ENCODE measurements at regions of chr1 and their contacts with region 1.

Region 1: GRCh38 chr1:59947047-59947938 is 20.7 kb upstream of the CYP2J2 start:
- DNase-seq: peak; percentile 60
- H3K4me3 ChIP-seq: peak overlapping the region in 1 of 2 experiments; percentile 45; a peak in 1 of 4 replicates
- H3K27ac ChIP-seq: no peak overlapping the region
- H3K4me1 ChIP-seq: peaks cover 4 to 6% of the 10 kb centered on the region in 2 experiments; a peak in 2 of 4 replicates
- H3K27me3 ChIP-seq: peaks cover 4% of the 10 kb centered on the region; the same call in 1 of the 2 replicates
- CTCF ChIP-seq: peak; percentile 92
- EP300 ChIP-seq: no peak
- RAD21 ChIP-seq: peak; percentile 92

Region 2: GRCh38 chr1:59879574-59879973 is 67.7 kb before region 1 on chr1:
- CTCF ChIA-PET with region 1: interaction called, 50 read pairs
- POLR2A ChIA-PET with region 1: no interaction called
- DNase-seq: peak; percentile 26
- H3K4me3 ChIP-seq: no peak overlapping the region; a peak in 1 of 4 replicates
- H3K27ac ChIP-seq: no peak overlapping the region
- H3K4me1 ChIP-seq: no peaks in the 10 kb centered on the region; a peak in 1 of 4 replicates
- H3K27me3 ChIP-seq: no peaks in the 10 kb centered on the region
- CTCF ChIP-seq: peak; percentile 53
- EP300 ChIP-seq: no peak
- RAD21 ChIP-seq: peak; percentile 62

Region 3: GRCh38 chr1:59892841-59893811 is 54.2 kb before region 1 on chr1:
- CTCF ChIA-PET with region 1: interaction called, 24 read pairs
- POLR2A ChIA-PET with region 1: no interaction called
- DNase-seq: no peak
- H3K4me3 ChIP-seq: no peak overlapping the region
- H3K27ac ChIP-seq: no peak overlapping the region
- H3K4me1 ChIP-seq: no peaks in the 10 kb centered on the region
- H3K27me3 ChIP-seq: no peaks in the 10 kb centered on the region
- CTCF ChIP-seq: no peak
- EP300 ChIP-seq: no peak
- RAD21 ChIP-seq: no peak

Region 4: GRCh38 chr1:59917026-59917784 is 30.1 kb before region 1 on chr1:
- CTCF ChIA-PET with region 1: interaction called, 193 read pairs
- POLR2A ChIA-PET with region 1: no interaction called
- DNase-seq: no peak
- H3K4me3 ChIP-seq: no peak overlapping the region
- H3K27ac ChIP-seq: no peak overlapping the region
- H3K4me1 ChIP-seq: no peaks in the 10 kb centered on the region
- H3K27me3 ChIP-seq: no peaks in the 10 kb centered on the region
- CTCF ChIP-seq: no peak
- EP300 ChIP-seq: no peak
- RAD21 ChIP-seq: no peak

Region 5: DNA sequence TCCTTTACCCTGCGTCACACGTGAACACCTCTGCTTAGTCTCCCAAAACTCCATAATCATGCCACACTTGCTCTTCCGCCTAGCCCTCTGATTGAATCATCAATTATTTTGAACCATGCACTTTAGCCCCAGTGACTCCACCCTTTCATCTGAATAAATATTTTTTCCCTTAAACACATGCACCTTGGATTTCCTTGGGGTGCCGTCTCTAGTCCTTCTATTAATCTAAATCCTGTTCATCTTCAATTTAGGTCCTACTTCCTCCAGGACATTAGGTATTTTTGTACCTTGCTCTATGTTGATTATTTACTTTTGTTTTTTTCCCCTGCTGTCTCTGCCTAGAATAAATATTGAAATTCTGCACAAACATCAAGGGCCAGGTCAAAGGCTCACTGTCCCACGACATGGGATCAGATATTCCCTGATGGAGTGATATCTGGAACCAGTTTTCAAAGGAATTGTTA is 10.9 kb before region 1 on chr1:
- CTCF ChIA-PET with region 1: interaction called, 60 read pairs
- POLR2A ChIA-PET with region 1: interaction called, 3 read pairs
- DNase-seq: no peak
- H3K4me3 ChIP-seq: no peak overlapping the region
- H3K27ac ChIP-seq: no peak overlapping the region
- H3K4me1 ChIP-seq: no peaks in the 10 kb centered on the region
- H3K27me3 ChIP-seq: no peaks in the 10 kb centered on the region
- CTCF ChIP-seq: no peak
- EP300 ChIP-seq: no peak
- RAD21 ChIP-seq: no peak